Calu3 (cell line): ENCODE measurements at regions of chr17 and their contacts with region 1.

Region 1: DNA sequence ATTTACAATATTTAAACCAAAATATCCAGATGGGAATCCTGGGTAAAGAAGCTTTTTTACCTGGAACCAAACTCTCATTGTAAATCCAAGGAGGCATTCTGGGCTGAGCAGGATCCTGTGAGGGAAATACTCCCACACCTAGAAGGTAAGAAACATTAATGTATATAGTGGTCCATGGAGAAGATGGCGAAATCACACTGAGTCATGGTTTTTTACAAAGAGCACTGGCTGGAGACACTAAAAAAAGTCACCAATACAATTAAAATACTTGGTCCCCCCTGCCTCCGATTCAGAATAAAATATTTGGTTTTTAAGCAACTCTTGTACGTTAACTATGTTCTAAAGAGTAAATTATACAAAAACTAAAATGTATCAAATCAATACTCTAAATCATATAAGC is 32.9 kb downstream of the SYNRG start:
- DNase-seq: no peak
- H3K4me3 Mint-ChIP-seq: no peak overlapping the region
- H3K27ac Mint-ChIP-seq: no peak overlapping the region
- H3K4me1 Mint-ChIP-seq: no peaks in the 10 kb centered on the region
- H3K27me3 Mint-ChIP-seq: no peaks in the 10 kb centered on the region
- CTCF ChIP-seq: no peak

Region 2: GRCh38 chr17:37506678-37507077 is 69.6 kb before region 1 on chr17:
- CTCF ChIA-PET with region 1: no interaction called
- intact Hi-C with region 1: no loop called
- DNase-seq: peak; percentile 77
- H3K4me3 Mint-ChIP-seq: no peak overlapping the region
- H3K27ac Mint-ChIP-seq: no peak overlapping the region
- H3K4me1 Mint-ChIP-seq: no peaks in the 10 kb centered on the region
- H3K27me3 Mint-ChIP-seq: no peaks in the 10 kb centered on the region
- CTCF ChIP-seq: peak; percentile 98

Region 3: GRCh38 chr17:37562016-37562745 is 14.1 kb before region 1 on chr17:
- CTCF ChIA-PET with region 1: interaction called, 6 read pairs
- intact Hi-C with region 1: loop called (anchors 2 kb)
- DNase-seq: no peak
- H3K4me3 Mint-ChIP-seq: no peak overlapping the region
- H3K27ac Mint-ChIP-seq: no peak overlapping the region
- H3K4me1 Mint-ChIP-seq: no peaks in the 10 kb centered on the region
- H3K27me3 Mint-ChIP-seq: no peaks in the 10 kb centered on the region
- CTCF ChIP-seq: no peak

Region 4: GRCh38 chr17:37676115-37676925 is 100.0 kb after region 1 on chr17:
- CTCF ChIA-PET with region 1: no interaction called
- intact Hi-C with region 1: no loop called
- DNase-seq: no peak
- H3K4me3 Mint-ChIP-seq: no peak overlapping the region
- H3K27ac Mint-ChIP-seq: no peak overlapping the region
- H3K4me1 Mint-ChIP-seq: peaks cover 8% of the 10 kb centered on the region
- H3K27me3 Mint-ChIP-seq: peaks cover 9% of the 10 kb centered on the region
- CTCF ChIP-seq: no peak

Region 5: GRCh38 chr17:37701496-37701898 is 125.2 kb after region 1 on chr17:
- CTCF ChIA-PET with region 1: no interaction called
- intact Hi-C with region 1: no loop called
- DNase-seq: peak; percentile 93
- H3K4me3 Mint-ChIP-seq: peak overlapping the region; percentile 2
- H3K27ac Mint-ChIP-seq: peak overlapping the region; percentile 52
- H3K4me1 Mint-ChIP-seq: peaks cover 95% of the 10 kb centered on the region
- H3K27me3 Mint-ChIP-seq: no peaks in the 10 kb centered on the region
- CTCF ChIP-seq: peak; percentile 99